Activated CD4-positive, alpha-beta T cell treated with anti-CD3 and anti-CD28 coated beads for 36 hours (primary cell): ENCODE measurements at regions of chr6 and their contacts with region 1.

Region 1: DNA sequence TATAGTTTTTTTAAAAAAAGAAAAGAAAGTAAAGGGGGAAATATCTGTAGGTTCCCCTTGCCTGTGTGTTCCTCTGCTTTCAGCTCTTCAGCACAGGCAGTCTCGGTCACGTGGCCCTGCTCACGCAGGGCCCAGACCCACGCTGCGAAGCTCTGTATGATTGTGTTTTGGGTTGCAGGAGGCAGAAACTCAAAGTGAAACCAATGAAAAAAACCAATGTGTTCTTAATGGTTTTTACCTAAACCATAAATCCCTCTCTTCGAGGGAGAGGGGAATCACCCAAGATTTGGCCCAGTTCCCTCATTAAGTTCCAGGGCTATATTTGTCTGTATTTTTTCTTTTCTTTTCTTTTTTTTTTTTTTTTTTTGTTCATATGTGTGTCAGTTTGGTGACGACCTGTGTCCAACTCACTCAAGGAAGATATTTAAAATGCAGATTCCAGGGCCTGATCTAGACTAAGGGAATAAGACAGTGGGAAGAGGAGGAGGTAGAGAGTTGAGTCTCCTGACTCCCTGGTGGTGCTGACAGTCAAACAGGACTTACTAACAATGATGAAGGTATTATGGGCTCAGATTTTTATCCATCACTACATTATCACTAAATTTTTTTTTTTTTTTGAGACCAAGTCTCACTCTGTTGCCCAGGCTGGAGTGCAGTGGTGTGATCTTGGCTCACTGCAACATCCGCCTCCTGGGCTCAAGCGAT is 33.8 kb upstream of the RREB1 start:
- DNase-seq: peak; percentile 87
- ATAC-seq: peak; percentile 99
- H3K4me3 Mint-ChIP-seq: no peak overlapping the region
- H3K27ac Mint-ChIP-seq: no peak overlapping the region
- H3K4me1 Mint-ChIP-seq: peaks cover 12% of the 10 kb centered on the region
- H3K27me3 Mint-ChIP-seq: peaks cover 26% of the 10 kb centered on the region

Region 2: GRCh38 chr6:6788394-6789020 is 285.5 kb before region 1 on chr6:
- CTCF ChIA-PET with region 1: no interaction called
- POLR2A ChIA-PET with region 1: no interaction called
- intact Hi-C with region 1: loop called in 1 of 2 experiments (anchors 5 kb)
- DNase-seq: peak; percentile 53
- ATAC-seq: peak; percentile 89
- H3K4me3 Mint-ChIP-seq: no peak overlapping the region
- H3K27ac Mint-ChIP-seq: no peak overlapping the region
- H3K4me1 Mint-ChIP-seq: peaks cover under 1% of the 10 kb centered on the region
- H3K27me3 Mint-ChIP-seq: no peaks in the 10 kb centered on the region